ENCODE measurements at regions of chr19 and their contacts with region 1.

Region 1: DNA sequence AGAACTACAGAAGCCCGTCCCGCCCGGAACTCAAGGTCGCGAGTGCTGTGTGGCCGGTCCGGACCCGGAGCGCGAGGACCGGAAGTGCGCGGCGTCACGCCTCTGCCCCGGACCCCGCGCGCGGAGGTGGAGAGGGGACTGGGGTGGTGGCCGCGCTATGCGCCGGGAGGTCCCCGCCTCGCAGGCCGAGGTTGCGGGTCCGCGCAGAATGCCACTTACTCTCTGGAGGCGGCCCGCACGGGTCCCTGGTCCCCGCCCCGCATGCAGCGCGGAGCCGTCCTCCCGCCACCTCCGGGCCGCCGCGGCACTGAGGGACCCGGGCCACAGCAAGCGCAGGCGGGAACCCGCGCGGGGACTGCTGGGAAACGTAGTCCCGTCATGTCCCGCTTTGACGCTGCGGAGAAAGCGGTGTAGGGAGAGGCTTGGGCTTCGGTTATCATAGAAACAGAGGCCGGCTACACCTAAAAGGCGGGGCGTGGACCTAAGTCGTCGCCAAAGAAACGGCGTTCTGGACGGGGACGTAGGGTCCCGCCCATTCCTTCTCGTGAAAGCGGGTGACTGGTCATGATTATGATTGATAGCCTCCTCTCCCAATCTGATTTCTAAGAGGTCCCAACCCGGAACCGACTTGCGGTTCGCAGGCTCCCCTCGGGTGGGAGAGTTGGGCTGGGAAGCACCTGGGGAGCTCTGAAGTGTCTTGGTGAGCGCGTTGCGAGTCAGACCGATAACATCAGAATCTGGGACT is at the start of gene ZNF837:
- DNase-seq: peak; percentile 99
- H3K4me3 Mint-ChIP-seq: peak within 1 kb of the TSS; percentile 86
- H3K27ac Mint-ChIP-seq: peak within 1 kb of the TSS; percentile 90
- H3K4me1 Mint-ChIP-seq: peaks cover 20% of the 10 kb centered on the region
- H3K27me3 Mint-ChIP-seq: no peaks in the 10 kb centered on the region
- total RNA-seq, gene ZNF837: 1.7 to 1.9 TPM

Region 2: GRCh38 chr19:58097781-58098681 is 282.9 kb before region 1 on chr19 and contains the start of gene ZSCAN18:
- CTCF ChIA-PET with region 1: no interaction called
- intact Hi-C with region 1: loop called (anchors 1 kb)
- DNase-seq: peak; percentile 95
- H3K4me3 Mint-ChIP-seq: peak within 1 kb of the TSS; percentile 85
- H3K27ac Mint-ChIP-seq: peak within 1 kb of the TSS; percentile 93
- H3K4me1 Mint-ChIP-seq: peaks cover 14% of the 10 kb centered on the region
- H3K27me3 Mint-ChIP-seq: no peaks in the 10 kb centered on the region
- total RNA-seq, gene ZSCAN18: 25.7 to 26.1 TPM

Region 3: DNA sequence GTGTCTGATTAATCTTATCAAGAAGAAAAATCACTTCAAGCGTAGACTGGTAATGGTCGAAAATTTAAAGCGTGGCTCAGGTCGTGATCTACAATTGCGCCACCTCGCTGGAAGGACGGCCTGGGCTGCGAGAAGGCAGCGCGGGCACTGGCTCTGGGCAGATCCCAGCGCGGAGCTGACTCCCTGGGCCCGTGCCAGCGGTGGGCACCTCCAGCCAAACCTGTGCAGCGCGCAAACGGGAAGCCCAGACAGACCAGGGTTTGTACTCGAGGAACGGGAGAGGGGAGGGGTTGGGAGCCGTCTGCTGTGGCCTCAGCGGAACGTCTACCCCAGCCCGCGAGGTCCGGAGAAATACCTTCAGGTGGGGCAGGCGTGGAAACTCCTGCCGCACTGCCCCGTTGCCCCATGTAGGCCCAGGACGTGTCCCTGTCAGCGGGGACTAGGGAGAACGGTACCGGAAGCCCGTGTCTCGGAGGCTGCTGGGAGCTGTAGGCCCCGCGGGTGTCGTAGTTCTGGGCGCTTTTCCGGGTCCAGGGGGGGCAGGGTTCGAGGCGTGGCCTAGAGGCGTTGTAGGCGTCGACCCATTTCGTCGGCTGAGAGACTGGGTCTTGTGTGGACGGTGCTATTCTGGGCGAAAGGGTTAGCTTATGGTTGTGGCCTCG is 176.9 kb before region 1 on chr19:
- CTCF ChIA-PET with region 1: no interaction called
- intact Hi-C with region 1: no loop called
- DNase-seq: no peak
- H3K4me3 Mint-ChIP-seq: no peak overlapping the region
- H3K27ac Mint-ChIP-seq: no peak overlapping the region
- H3K4me1 Mint-ChIP-seq: no peaks in the 10 kb centered on the region
- H3K27me3 Mint-ChIP-seq: no peaks in the 10 kb centered on the region

Region 4: GRCh38 chr19:58326914-58327726 is 53.8 kb before region 1 on chr19 and contains the start of gene ZSCAN22:
- CTCF ChIA-PET with region 1: no interaction called
- intact Hi-C with region 1: loop called (anchors 1 kb)
- DNase-seq: peak; percentile 95
- H3K4me3 Mint-ChIP-seq: no peak within 1 kb of the TSS
- H3K27ac Mint-ChIP-seq: no peak within 1 kb of the TSS
- H3K4me1 Mint-ChIP-seq: no peaks in the 10 kb centered on the region
- H3K27me3 Mint-ChIP-seq: no peaks in the 10 kb centered on the region
- total RNA-seq, gene ZSCAN22: 1.2 to 1.3 TPM

Region 5: DNA sequence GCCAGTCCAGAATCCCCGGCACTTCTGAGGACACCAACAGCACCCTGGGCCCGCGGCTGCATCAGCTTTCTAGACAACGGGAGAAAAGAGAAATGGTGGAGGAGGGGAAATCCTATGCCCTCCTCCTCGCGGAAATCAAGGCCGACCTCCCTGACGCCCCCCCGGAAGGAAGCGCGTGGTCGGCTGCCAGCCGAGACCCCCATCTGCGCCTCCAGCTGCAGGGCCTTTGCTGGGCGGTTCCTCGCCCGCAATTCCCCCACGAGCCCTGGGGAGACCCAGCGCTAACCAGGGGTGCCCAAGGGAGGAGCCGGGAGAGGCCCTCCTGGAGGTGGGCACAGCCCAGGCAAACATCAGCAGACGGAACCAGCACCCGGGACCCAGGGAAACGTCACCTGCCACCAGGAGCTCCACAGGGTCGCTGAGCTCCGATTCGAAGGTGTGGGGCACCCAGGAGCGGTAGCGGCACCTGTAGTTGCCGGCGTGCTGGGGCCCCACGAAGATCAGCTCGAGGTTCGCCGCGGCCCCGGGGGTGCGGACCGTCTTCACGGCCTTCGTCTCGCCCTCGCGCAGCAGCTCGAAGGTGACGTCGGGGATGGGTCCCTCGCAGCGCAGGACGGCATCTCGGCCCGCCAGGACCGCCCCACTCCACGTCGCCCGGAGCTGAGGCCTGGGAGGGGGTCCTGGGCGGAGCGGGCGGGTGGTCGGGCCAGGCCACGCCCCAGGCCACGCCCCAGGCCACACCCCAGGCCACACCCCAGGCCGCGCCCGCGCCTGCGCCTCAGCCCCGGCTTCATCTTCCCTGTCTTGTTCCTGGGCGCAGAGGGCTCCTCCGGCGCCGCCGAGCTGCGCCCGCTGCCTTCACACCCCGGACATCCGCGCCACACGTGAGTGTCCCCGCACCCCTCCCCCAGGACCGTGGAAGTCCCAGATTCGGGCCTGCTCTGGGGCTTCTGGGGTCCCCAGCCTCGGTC is 33.6 kb before region 1 on chr19:
- CTCF ChIA-PET with region 1: no interaction called
- intact Hi-C with region 1: no loop called
- DNase-seq: peak; percentile 69
- H3K4me3 Mint-ChIP-seq: peak overlapping the region; percentile 87
- H3K27ac Mint-ChIP-seq: peak overlapping the region; percentile 21
- H3K4me1 Mint-ChIP-seq: peaks cover 23% of the 10 kb centered on the region
- H3K27me3 Mint-ChIP-seq: peaks cover 5% of the 10 kb centered on the region

Region 6: GRCh38 chr19:58408152-58409009 is 27.5 kb after region 1 on chr19 and contains the start of gene ZNF584:
- CTCF ChIA-PET with region 1: no interaction called
- intact Hi-C with region 1: loop called (anchors 1 kb)
- DNase-seq: peak; percentile 97
- H3K4me3 Mint-ChIP-seq: peak within 1 kb of the TSS; percentile 89
- H3K27ac Mint-ChIP-seq: peak within 1 kb of the TSS; percentile 93
- H3K4me1 Mint-ChIP-seq: peaks cover 30% of the 10 kb centered on the region
- H3K27me3 Mint-ChIP-seq: no peaks in the 10 kb centered on the region
- total RNA-seq, gene ZNF584: 3.4 to 4.8 TPM

Region 7: GRCh38 chr19:58466760-58467589 is 86.1 kb after region 1 on chr19 and contains the start of gene ZNF324:
- CTCF ChIA-PET with region 1: no interaction called
- intact Hi-C with region 1: loop called (anchors 2 kb)
- DNase-seq: peak; percentile 99
- H3K4me3 Mint-ChIP-seq: peak within 1 kb of the TSS; percentile 83
- H3K27ac Mint-ChIP-seq: no peak within 1 kb of the TSS
- H3K4me1 Mint-ChIP-seq: peaks cover 20% of the 10 kb centered on the region
- H3K27me3 Mint-ChIP-seq: peaks cover 2% of the 10 kb centered on the region
- total RNA-seq, gene ZNF324: 2.4 to 3.0 TPM

Region 8: GRCh38 chr19:58558623-58559274 is 177.9 kb after region 1 on chr19:
- CTCF ChIA-PET with region 1: no interaction called
- intact Hi-C with region 1: loop called (anchors 1 kb)
- DNase-seq: peak; percentile 100
- H3K4me3 Mint-ChIP-seq: peak overlapping the region; percentile 90
- H3K27ac Mint-ChIP-seq: peak overlapping the region; percentile 100
- H3K4me1 Mint-ChIP-seq: peaks cover 66% of the 10 kb centered on the region
- H3K27me3 Mint-ChIP-seq: no peaks in the 10 kb centered on the region

Measured in activated naive CD4-positive, alpha-beta T cell treated with anti-CD3 and anti-CD28 coated beads for 36 hours (primary cell).